A673 (cell line): ENCODE measurements at regions of chr16 and their contacts with region 1.

Region 1: DNA sequence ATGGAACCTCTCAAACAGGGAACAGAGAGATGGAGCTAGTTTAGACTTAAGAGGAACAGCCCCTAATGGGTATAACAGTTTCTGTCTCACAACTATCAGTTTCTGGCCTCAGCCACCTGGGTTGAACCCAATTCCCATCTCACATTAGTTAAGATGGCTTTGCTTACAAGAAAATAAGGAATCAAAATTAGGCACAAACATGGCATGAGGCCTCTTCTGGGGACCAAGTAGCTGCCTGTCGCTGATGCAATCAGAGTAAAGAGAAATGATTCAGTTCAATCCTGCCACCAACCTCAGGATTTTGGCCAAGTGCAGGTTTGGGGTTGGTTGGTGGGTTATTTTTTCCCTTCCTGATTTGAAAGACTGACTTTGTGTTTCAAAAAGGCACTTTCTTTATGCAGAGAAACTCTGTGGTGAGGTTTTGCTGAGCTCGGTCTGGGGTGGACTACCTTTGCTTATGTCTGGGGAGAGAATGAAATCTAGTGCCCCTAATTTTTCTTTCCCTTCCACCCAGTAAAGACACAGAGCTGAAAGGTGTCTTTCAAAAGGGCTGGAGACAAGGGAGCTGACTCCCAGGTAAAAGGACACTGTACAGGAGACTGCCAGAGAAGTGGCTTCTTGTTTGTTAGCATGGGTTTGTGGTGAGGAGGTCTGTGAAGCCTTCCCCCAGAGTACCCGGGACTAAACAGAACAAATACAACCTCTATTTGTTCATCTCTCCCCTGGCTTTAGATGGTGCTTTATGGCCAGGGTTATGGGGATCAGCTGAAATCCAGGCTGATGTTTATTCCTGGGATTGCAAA is 44.8 kb upstream of the NFAT5 start:
- DNase-seq: no peak
- H3K4me3 ChIP-seq: no peak overlapping the region
- H3K27ac ChIP-seq: no peak overlapping the region
- H3K4me1 ChIP-seq: no peaks in the 10 kb centered on the region
- H3K27me3 ChIP-seq: no peaks in the 10 kb centered on the region
- CTCF ChIP-seq: no peak

Region 2: GRCh38 chr16:69581297-69581696 is 60.3 kb after region 1 on chr16:
- CTCF ChIA-PET with region 1: no interaction called
- POLR2A ChIA-PET with region 1: interaction called, 15 read pairs
- intact Hi-C with region 1: no loop called
- DNase-seq: no peak
- H3K4me3 ChIP-seq: no peak overlapping the region
- H3K27ac ChIP-seq: no peak overlapping the region
- H3K4me1 ChIP-seq: peaks cover 6% of the 10 kb centered on the region
- H3K27me3 ChIP-seq: no peaks in the 10 kb centered on the region
- CTCF ChIP-seq: no peak

Region 3: GRCh38 chr16:69804297-69804696 is 283.3 kb after region 1 on chr16:
- CTCF ChIA-PET with region 1: no interaction called
- POLR2A ChIA-PET with region 1: no interaction called
- intact Hi-C with region 1: no loop called
- DNase-seq: no peak
- H3K4me3 ChIP-seq: no peak overlapping the region
- H3K27ac ChIP-seq: no peak overlapping the region
- H3K4me1 ChIP-seq: peaks cover 6% of the 10 kb centered on the region
- H3K27me3 ChIP-seq: no peaks in the 10 kb centered on the region
- CTCF ChIP-seq: no peak